Activated B cell treated with CpG ODN at 0.5 μM for 24 hours (primary cell): ENCODE measurements at regions of chr12 and their contacts with region 1.

Region 1: DNA sequence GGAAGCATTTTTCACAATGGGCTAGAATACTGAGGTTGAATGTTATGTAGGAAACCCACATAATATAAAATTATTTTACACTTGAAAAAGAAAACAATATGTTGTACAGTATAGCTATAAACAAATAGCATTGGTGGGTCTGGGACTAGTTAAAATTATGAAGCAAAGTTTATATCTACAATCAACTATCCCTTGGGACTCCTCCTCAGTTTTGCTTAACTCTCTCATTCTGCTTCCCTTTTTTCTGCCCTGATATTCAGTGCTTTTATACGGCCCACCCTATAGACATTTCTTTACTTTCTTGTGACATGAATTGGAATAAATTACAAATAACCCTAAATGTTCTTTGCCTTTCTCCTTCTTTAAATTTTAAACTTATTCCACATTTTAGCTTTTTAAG is 300.5 kb downstream of the FBXL14 start:
- DNase-seq: no peak
- ATAC-seq: no peak
- H3K4me3 Mint-ChIP-seq: no peak overlapping the region
- H3K27ac Mint-ChIP-seq: no peak overlapping the region
- H3K4me1 Mint-ChIP-seq: peaks cover 7% of the 10 kb centered on the region
- H3K27me3 Mint-ChIP-seq: no peaks in the 10 kb centered on the region
- CTCF ChIP-seq: no peak

Region 2: DNA sequence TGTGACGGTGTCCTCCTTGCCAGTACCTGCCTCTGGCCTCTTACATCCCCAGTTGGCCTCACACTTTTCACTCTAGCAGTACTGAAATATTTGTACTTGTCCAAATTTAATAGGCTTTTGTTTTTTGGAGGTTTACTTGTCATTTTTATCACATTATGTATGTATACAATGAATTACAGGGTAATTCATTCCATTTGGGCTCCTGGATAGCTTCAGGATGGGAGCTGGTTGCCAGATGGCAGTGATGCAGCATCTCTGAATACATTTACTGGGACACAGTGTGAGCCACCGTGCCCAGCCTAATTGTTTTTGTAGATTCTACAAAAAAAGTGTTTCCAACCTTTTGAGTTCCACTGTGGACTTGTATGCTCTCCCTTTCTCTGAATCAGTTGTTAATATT is 879.0 kb before region 1 on chr12:
- CTCF ChIA-PET with region 1: no interaction called
- POLR2A ChIA-PET with region 1: no interaction called
- intact Hi-C with region 1: no loop called
- DNase-seq: no peak
- ATAC-seq: no peak
- H3K4me3 Mint-ChIP-seq: no peak overlapping the region
- H3K27ac Mint-ChIP-seq: no peak overlapping the region
- H3K4me1 Mint-ChIP-seq: no peaks in the 10 kb centered on the region
- H3K27me3 Mint-ChIP-seq: no peaks in the 10 kb centered on the region
- CTCF ChIP-seq: no peak

Region 3: DNA sequence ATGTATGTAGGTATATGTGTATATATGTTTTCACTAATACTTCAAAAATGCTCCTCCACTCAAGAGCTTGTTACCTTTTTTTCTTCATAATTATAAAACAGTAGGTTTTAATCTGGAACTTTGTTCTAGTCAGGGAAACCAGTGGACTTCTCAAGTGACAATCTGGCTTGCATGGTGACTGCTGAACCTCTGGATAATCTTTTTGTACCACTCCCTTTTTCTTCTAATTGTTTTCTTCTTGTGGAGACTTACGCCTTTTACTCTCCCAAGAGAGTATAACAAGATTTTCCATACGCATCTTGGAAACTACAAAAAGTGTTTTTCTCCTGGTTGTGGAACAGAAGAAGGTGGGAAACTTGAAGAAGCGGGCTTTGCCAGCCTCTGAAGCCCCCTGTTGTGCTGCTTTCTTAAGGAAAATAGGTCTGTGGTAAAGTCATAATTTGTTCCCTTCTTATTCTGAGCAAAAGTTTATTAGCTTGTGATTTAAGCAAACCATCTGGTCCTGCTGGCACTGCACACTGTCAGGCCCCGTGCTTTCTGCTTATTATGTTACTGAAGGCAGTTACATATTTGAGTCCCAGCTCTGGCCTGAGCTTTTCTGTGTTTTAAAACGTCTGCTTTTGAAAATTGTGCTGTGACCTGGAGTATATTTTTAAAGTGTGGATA is 11.1 kb before region 1 on chr12:
- CTCF ChIA-PET with region 1: no interaction called
- POLR2A ChIA-PET with region 1: no interaction called
- intact Hi-C with region 1: no loop called
- DNase-seq: no peak
- ATAC-seq: no peak
- H3K4me3 Mint-ChIP-seq: no peak overlapping the region
- H3K27ac Mint-ChIP-seq: no peak overlapping the region
- H3K4me1 Mint-ChIP-seq: peaks cover 5% of the 10 kb centered on the region
- H3K27me3 Mint-ChIP-seq: no peaks in the 10 kb centered on the region
- CTCF ChIP-seq: no peak

Region 4: GRCh38 chr12:2560356-2560755 is 1266.5 kb after region 1 on chr12:
- CTCF ChIA-PET with region 1: no interaction called
- POLR2A ChIA-PET with region 1: interaction called, 10 read pairs
- intact Hi-C with region 1: no loop called
- DNase-seq: no peak
- ATAC-seq: no peak
- H3K4me3 Mint-ChIP-seq: no peak overlapping the region
- H3K27ac Mint-ChIP-seq: no peak overlapping the region
- H3K4me1 Mint-ChIP-seq: peaks cover 1% of the 10 kb centered on the region
- H3K27me3 Mint-ChIP-seq: peaks cover 2% of the 10 kb centered on the region
- CTCF ChIP-seq: no peak